ENCODE measurements at regions of chr21 and their contacts with region 1.

Region 1: GRCh38 chr21:14864211-14865021 is 200.4 kb downstream of the NRIP1 start:
- DNase-seq: peak; percentile 67 to 68
- ATAC-seq: peak; percentile 86 to 95 (median 90)
- H3K4me3 ChIP-seq: no peak overlapping the region
- H3K27ac ChIP-seq: peak overlapping the region in 2 of 10 donors; percentile 7 to 9
- H3K4me1 ChIP-seq: peaks cover 0 to 43% (median 17%) of the 10 kb centered on the region in 9 donors
- H3K27me3 ChIP-seq: no peaks in the 10 kb centered on the region
- CTCF ChIP-seq: peak; percentile 25 to 70 (median 63)

Region 2: DNA sequence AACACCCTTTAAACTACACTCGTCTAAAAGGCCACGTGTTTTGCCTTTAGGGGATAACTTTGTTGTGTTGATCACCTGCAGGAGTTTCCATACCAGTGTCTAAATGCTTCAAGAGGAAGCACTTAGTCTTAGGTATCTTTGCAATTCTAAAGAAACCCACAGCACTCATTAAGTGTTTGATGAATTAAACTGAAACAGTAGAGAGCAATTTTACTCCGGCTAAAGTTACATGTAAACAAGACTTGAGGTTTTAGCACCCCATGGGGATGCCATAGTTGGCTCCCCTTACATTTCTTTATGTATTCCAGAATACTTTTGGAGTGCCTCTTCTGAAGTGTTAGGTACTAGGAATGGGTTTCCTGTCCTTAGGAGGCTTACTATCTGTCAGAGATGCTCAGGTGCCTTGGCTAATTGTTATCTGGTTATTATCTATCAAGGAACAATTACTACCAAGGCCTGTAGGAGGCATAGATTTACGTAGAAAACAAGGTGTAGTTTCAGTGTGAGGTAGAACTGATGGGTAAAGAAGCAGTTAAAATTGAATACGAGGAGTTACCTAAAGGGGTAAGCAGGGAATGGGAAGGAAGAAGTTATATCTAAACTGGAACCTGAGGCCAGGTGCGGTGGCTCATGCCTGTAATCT is 141.5 kb before region 1 on chr21:
- intact Hi-C with region 1: no loop called
- DNase-seq: no peak
- ATAC-seq: no peak
- H3K4me3 ChIP-seq: no peak overlapping the region
- H3K27ac ChIP-seq: no peak overlapping the region
- H3K4me1 ChIP-seq: no peaks in the 10 kb centered on the region
- H3K27me3 ChIP-seq: no peaks in the 10 kb centered on the region
- CTCF ChIP-seq: no peak

Region 3: GRCh38 chr21:14814991-14815390 is 49.4 kb before region 1 on chr21:
- intact Hi-C with region 1: no loop called
- DNase-seq: no peak
- ATAC-seq: no peak
- H3K4me3 ChIP-seq: no peak overlapping the region
- H3K27ac ChIP-seq: no peak overlapping the region
- H3K4me1 ChIP-seq: no peaks in the 10 kb centered on the region
- H3K27me3 ChIP-seq: no peaks in the 10 kb centered on the region
- CTCF ChIP-seq: no peak

Region 4: GRCh38 chr21:14956807-14957206 is 92.4 kb after region 1 on chr21:
- intact Hi-C with region 1: no loop called
- DNase-seq: no peak
- ATAC-seq: no peak
- H3K4me3 ChIP-seq: no peak overlapping the region
- H3K27ac ChIP-seq: no peak overlapping the region
- H3K4me1 ChIP-seq: peaks cover 0 to 5% (median 0%) of the 10 kb centered on the region in 9 donors
- H3K27me3 ChIP-seq: no peaks in the 10 kb centered on the region
- CTCF ChIP-seq: no peak

Region 5: GRCh38 chr21:14977814-14978213 is 113.4 kb after region 1 on chr21:
- intact Hi-C with region 1: loop called in 1 of 10 experiments (anchors 10 kb)
- DNase-seq: no peak
- ATAC-seq: no peak
- H3K4me3 ChIP-seq: no peak overlapping the region
- H3K27ac ChIP-seq: no peak overlapping the region
- H3K4me1 ChIP-seq: peaks cover 0 to 30% (median 9%) of the 10 kb centered on the region in 9 donors
- H3K27me3 ChIP-seq: no peaks in the 10 kb centered on the region
- CTCF ChIP-seq: no peak

Region 6: DNA sequence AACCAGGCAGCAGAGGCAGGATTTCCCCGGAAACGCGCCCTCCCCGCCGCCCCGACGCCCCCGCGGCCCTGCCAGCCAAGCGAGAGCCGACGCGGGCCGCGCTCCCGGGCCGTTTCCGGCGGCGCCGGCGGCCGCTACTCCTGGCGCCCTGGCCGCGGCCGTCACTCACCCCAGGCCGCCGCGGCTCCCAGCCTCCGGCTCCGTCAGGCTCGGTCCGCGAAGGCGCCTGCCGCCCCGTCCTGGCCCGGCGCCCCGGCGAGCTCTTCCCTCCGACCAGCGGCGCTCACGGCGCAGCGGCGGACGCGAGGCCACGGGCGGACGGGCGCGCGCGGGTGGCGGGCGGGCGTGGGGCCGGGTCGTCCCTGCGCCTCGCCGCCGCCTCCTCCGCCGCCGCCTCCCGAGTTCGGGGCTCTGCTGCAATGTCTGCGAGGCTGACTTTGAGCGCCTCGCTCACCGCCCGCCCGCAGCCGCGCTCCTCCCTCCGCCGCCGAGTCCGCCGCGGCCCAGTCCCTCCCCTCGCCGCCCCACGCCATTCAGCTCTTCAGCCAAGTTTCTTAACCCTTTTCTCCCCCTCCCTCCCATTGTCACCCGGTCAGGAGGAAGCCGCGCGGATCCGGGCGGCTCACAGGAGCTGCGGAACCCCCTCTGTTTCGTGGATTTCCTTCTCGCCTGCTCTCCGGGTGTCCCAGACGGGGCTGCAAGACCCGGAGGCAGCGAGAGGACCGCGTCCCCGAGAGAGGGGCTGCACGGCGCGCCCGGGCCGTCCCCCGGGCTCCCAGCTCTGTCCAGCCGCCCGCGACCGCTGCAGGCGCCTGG is 200.4 kb after region 1 on chr21 and contains the start of gene NRIP1:
- intact Hi-C with region 1: loop called in 5 of 10 experiments (anchors 5 to 10 kb)
- DNase-seq: peak; percentile 93 to 94
- ATAC-seq: peak; percentile 92 to 98 (median 95)
- H3K4me3 ChIP-seq: peak within 1 kb of the TSS; percentile 83 to 96 (median 90)
- H3K27ac ChIP-seq: peak within 1 kb of the TSS; percentile 92 to 99 (median 97)
- H3K4me1 ChIP-seq: peaks cover 0 to 47% (median 38%) of the 10 kb centered on the region in 9 donors
- H3K27me3 ChIP-seq: no peaks in the 10 kb centered on the region
- CTCF ChIP-seq: no peak
- total RNA-seq, gene NRIP1: 13.6 to 40.3 (median 17.9) TPM

Region 7: DNA sequence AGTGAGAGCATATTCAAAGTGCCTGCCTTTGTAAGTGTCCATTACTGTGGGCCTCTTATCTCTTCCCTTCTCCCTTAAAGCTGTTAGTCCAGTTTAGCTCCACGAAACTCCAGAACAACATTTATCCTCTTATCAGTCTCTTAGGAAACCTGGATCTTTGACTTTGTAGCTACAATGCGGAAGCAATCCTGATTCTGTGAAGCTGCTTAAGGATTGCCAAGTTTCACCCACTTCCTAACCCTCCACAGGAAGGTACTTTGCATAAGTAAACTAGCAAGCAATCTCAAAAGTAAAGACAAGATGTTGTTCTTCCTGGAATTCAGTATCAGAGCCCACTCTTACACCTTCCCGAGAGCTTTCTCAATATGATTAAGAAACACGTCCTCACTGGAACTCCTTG is 700.5 kb after region 1 on chr21:
- intact Hi-C with region 1: loop called in 1 of 10 experiments (anchors 5 kb)
- DNase-seq: no peak
- ATAC-seq: no peak
- H3K4me3 ChIP-seq: no peak overlapping the region
- H3K27ac ChIP-seq: no peak overlapping the region
- H3K4me1 ChIP-seq: no peaks in the 10 kb centered on the region
- H3K27me3 ChIP-seq: no peaks in the 10 kb centered on the region
- CTCF ChIP-seq: no peak